ENCODE measurements at regions of chr11 and their contacts with region 1.

Region 1: GRCh38 chr11:126607374-126607773 is 251.9 kb downstream of the ST3GAL4 start:
- H3K4me3 ChIP-seq: no peak overlapping the region
- H3K27ac ChIP-seq: no peak overlapping the region
- H3K4me1 ChIP-seq: no peaks in the 10 kb centered on the region
- CTCF ChIP-seq: peak; percentile 63

Region 2: DNA sequence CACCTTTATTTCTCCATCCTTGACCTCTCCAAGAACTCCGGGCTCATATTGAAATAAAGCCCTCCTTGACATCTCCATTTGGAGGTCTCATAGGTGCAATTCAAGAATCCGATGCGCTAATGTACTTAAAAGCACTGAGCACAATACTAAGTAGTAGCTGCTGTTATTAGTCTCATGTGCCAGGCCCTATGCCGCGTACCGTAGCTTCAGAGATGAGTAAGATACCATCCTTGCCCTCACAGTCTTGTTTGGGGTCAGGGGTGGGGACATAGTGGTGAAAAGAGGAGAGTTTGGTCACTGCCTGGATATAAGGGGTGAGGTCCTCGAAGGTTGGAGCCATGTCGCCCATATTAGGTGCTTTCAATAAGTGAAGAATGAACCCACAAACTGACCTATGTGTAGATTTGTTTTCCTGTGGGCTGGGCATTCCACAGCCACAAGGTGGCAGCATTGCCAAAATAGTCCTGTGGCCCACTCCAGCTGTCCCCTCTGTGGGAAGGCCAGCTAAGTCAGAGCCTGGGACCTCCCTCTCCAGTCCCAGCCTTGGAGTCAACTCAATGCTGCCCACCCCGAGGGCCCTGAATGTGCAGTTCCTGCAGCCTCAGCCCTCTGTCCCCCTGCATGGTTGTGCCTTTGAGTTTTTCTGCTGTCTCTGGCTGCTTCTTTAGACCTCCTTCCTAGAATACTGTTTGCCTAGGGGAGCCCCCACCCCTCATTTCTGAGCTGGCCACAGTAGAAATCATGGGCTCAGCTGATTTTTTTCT is 297.0 kb before region 1 on chr11:
- CTCF ChIA-PET with region 1: interaction called, 11 read pairs
- POLR2A ChIA-PET with region 1: no interaction called
- H3K4me3 ChIP-seq: no peak overlapping the region
- H3K27ac ChIP-seq: no peak overlapping the region
- H3K4me1 ChIP-seq: no peaks in the 10 kb centered on the region
- CTCF ChIP-seq: peak; percentile 49; the same call in 1 of the 2 replicates

Region 3: GRCh38 chr11:126989942-126990715 is 382.8 kb after region 1 on chr11:
- CTCF ChIA-PET with region 1: interaction called, 44 read pairs
- POLR2A ChIA-PET with region 1: no interaction called
- H3K4me3 ChIP-seq: no peak overlapping the region
- H3K27ac ChIP-seq: no peak overlapping the region
- H3K4me1 ChIP-seq: no peaks in the 10 kb centered on the region
- CTCF ChIP-seq: peak; percentile 56; the same call in 1 of the 2 replicates

Measured in HEK293 (cell line).